Activated B cell treated with CpG ODN at 0.5 μM for 24 hours (primary cell): ENCODE measurements at regions of chrX and their contacts with region 1.

Region 1: GRCh38 chrX:79146640-79147390 is 2.3 kb downstream of the GPR174 start:
- DNase-seq: no peak
- ATAC-seq: peak; percentile 67
- H3K4me3 Mint-ChIP-seq: peak overlapping the region; percentile 90
- H3K27ac Mint-ChIP-seq: peak overlapping the region; percentile 94
- H3K4me1 Mint-ChIP-seq: peaks cover 59% of the 10 kb centered on the region
- H3K27me3 Mint-ChIP-seq: no peaks in the 10 kb centered on the region
- CTCF ChIP-seq: no peak

Region 2: DNA sequence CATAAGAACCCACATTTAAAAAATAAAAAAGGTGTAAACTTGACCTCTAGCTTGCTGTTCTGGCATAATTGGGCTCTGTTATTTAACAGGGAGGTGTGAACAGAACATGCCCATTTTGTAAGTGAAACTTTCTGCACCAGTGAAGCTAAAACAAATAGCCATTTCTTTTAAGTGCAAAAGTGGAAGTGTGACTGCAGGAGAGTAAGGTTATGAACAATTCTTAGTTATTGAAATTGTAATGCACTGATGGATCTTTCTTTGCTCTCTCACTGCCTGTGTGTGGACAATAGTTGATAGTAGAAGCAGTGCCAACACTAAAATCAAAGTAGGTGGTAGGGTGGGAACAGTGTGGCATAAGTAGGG is 189.1 kb before region 1 on chrX:
- CTCF ChIA-PET with region 1: no interaction called
- POLR2A ChIA-PET with region 1: no interaction called
- intact Hi-C with region 1: loop called (anchors 2 kb)
- DNase-seq: no peak
- ATAC-seq: peak; percentile 85
- H3K4me3 Mint-ChIP-seq: peak overlapping the region; percentile 67
- H3K27ac Mint-ChIP-seq: peak overlapping the region; percentile 89
- H3K4me1 Mint-ChIP-seq: peaks cover 80% of the 10 kb centered on the region
- H3K27me3 Mint-ChIP-seq: no peaks in the 10 kb centered on the region
- CTCF ChIP-seq: no peak

Region 3: DNA sequence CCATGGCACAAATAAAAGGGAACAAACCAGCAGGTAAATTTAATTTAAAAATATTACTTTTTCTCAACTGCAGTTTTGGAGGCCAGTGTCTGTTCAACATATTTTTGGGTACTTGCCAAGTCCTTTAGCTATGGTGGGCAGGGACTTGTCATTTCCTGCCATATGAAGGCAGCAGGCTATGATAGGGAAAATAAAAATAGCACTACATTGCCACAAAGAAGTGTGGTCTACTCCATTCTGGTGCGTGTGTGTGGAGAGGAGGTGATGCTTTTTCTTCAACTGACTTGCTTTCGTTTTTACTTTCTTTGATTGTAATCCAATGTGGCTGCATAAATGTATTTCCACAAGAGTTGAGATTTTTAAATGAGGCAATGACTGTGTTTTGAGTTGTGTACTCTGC is 14.8 kb after region 1 on chrX:
- CTCF ChIA-PET with region 1: interaction called, 3 read pairs
- POLR2A ChIA-PET with region 1: interaction called, 5 read pairs
- intact Hi-C with region 1: loop called (anchors 2 kb)
- DNase-seq: no peak
- ATAC-seq: peak; percentile 84
- H3K4me3 Mint-ChIP-seq: peak overlapping the region; percentile 79
- H3K27ac Mint-ChIP-seq: peak overlapping the region; percentile 92
- H3K4me1 Mint-ChIP-seq: peaks cover 70% of the 10 kb centered on the region
- H3K27me3 Mint-ChIP-seq: no peaks in the 10 kb centered on the region
- CTCF ChIP-seq: no peak

Region 4: GRCh38 chrX:79259073-79259689 is 112.4 kb after region 1 on chrX:
- CTCF ChIA-PET with region 1: interaction called, 3 read pairs
- POLR2A ChIA-PET with region 1: interaction called, 13 read pairs
- intact Hi-C with region 1: loop called (anchors 1 kb)
- DNase-seq: no peak
- ATAC-seq: peak; percentile 83
- H3K4me3 Mint-ChIP-seq: peak overlapping the region; percentile 59
- H3K27ac Mint-ChIP-seq: peak overlapping the region; percentile 91
- H3K4me1 Mint-ChIP-seq: peaks cover 72% of the 10 kb centered on the region
- H3K27me3 Mint-ChIP-seq: no peaks in the 10 kb centered on the region
- CTCF ChIP-seq: no peak